ENCODE measurements at regions of chr13 and their contacts with region 1.

Region 1: DNA sequence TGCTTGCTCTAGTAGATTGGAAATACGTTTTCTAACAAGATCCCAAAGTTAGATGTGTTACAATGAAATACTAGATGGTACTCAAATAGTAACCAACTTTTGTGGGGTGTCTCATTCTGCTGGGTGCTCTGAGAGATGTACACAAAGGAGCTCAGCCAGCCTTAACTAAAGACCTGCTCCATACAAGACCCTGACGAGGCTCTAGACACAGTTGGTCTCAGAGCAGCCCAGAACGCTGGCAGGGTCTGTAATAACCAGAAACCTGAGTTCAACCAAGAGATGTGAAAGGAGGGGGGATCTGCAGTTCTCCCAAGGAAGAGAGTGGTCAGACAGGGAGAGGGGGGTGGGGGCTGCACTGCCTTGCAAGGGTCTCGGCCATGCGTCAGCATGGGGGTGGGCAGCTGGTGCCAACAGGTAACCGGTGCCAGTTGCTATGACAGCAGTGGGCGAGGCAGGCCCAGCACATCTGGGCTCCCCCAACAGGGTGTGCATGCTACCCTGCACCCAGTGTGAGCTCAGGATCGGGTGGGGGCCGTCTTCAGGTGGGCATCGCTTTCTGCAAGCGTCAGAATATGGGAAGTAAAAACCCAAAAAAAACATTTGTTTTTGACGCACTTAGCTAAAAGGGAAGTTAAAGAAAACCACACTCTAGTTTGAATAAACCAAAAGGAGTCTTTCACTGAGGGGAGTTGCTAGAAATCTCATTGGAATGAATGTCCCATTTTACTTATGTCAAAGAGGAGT is 68.0 kb upstream of the GPR183 start:
- DNase-seq: peak in 4 of 5 donors; percentile 37 to 91 (median 88)
- H3K4me3 ChIP-seq: peak overlapping the region; percentile 15
- H3K4me3 Mint-ChIP-seq: peak overlapping the region; percentile 55 to 83 (median 75)
- H3K27ac ChIP-seq: peak overlapping the region; percentile 33
- H3K27ac Mint-ChIP-seq: peak overlapping the region; percentile 92 to 99 (median 97)
- H3K4me1 ChIP-seq: peaks cover 90% of the 10 kb centered on the region
- H3K4me1 Mint-ChIP-seq: peaks cover 82 to 98% (median 97%) of the 10 kb centered on the region in 3 donors
- H3K27me3 ChIP-seq: no peaks in the 10 kb centered on the region
- H3K27me3 Mint-ChIP-seq: peaks cover 0 to 4% of the 10 kb centered on the region in 2 donors

Region 2: DNA sequence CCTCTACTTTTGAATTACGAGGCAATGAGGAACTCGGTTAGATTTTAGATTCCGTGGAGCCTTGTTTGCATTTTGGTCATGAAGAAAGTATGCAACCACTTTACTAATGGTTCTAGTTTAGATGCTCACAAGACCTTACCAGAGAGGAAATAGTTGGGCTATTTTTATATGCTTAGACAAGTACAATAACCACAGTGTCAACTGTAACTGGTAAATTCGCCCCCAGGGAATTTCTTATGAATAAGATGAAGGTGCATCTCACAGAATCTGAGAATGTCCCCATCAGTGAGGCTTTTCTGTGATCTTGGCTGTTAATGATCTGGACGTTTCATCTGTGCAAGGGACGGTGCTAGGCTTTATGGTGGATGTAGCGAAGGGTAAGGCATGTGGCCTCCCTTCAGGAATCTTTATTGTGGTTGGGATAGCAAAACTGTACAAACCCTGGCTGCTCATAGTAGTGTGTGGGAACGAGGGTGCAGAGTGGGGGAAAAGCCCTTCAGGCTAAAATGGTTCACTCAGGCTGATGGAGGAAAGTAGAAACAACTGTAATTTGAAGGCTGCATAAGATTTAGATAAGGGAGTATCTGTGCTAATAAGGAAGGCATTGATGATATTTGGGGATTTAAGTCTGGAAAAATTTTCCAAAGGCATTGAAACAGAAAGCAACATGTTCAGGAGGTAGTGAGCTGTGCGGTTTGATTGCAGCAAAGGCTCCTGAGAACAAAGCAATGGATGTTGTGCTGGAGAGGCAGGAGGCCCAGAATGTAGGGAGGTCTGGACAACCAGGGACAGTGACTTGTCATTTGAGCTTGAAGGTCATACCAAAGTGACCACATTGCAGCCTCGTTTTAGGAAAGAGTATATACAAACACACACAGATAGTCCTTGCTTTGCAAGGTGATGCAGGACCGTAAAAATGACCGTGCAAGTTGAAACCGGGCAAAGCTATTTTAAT is 146.2 kb before region 1 on chr13:
- CTCF ChIA-PET with region 1: no interaction called
- POLR2A ChIA-PET with region 1: no interaction called
- DNase-seq: peak in 1 of 5 donors; percentile 42
- H3K4me3 ChIP-seq: peak overlapping the region; percentile 23
- H3K4me3 Mint-ChIP-seq: peak overlapping the region; percentile 71 to 91 (median 80)
- H3K27ac ChIP-seq: no peak overlapping the region
- H3K27ac Mint-ChIP-seq: peak overlapping the region; percentile 83 to 97 (median 93)
- H3K4me1 ChIP-seq: peaks cover 77% of the 10 kb centered on the region
- H3K4me1 Mint-ChIP-seq: peaks cover 74 to 92% (median 86%) of the 10 kb centered on the region in 3 donors
- H3K27me3 ChIP-seq: no peaks in the 10 kb centered on the region
- H3K27me3 Mint-ChIP-seq: no peaks in the 10 kb centered on the region

Region 3: GRCh38 chr13:99356158-99357091 is 18.7 kb before region 1 on chr13:
- CTCF ChIA-PET with region 1: interaction called, 28 read pairs
- POLR2A ChIA-PET with region 1: interaction called, 18 read pairs
- DNase-seq: peak in 4 of 5 donors; percentile 55 to 92 (median 88)
- H3K4me3 ChIP-seq: peak overlapping the region; percentile 43
- H3K4me3 Mint-ChIP-seq: peak overlapping the region; percentile 2 to 79 (median 72)
- H3K27ac ChIP-seq: peak overlapping the region; percentile 96
- H3K27ac Mint-ChIP-seq: peak overlapping the region; percentile 96 to 100 (median 99)
- H3K4me1 ChIP-seq: peaks cover 97% of the 10 kb centered on the region
- H3K4me1 Mint-ChIP-seq: peaks cover 97 to 100% (median 100%) of the 10 kb centered on the region in 3 donors
- H3K27me3 ChIP-seq: no peaks in the 10 kb centered on the region
- H3K27me3 Mint-ChIP-seq: no peaks in the 10 kb centered on the region